ENCODE measurements at regions of chr7 and their contacts with region 1.

Region 1: DNA sequence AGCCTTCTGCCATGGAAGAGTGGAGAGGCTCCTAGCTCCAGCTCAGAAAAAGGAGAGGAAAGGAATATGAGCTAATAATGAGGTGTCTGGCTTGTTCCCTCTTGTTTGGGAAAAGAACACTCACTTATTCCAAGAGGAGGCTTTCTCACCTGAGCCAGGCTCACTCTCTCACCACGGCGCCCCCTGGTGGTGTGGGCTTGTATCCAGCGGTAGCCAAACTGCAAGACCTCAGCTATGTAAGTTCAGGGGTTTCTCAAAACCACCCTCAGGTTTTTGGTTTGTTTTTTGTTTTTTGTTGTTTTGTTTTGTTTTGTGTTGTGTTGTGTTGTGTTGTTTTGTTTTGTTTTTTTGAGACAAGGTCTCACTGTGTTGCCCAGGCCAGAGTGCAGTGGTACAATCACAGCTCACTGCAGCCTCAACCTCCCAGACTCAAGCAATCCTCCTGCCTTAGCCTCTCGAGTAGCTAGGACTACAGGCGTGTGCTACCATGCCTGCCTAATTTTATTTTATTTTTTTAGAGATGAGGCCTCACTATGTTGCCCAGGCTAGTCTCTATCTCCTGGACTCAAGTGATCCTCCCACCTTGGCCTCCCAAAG is 124.0 kb downstream of the TMEM130 start:
- DNase-seq: peak; percentile 76
- H3K4me3 ChIP-seq: no peak overlapping the region
- H3K27ac ChIP-seq: no peak overlapping the region
- H3K4me1 ChIP-seq: no peaks in the 10 kb centered on the region
- H3K27me3 ChIP-seq: no peaks in the 10 kb centered on the region
- CTCF ChIP-seq: peak; percentile 79

Region 2: GRCh38 chr7:98434095-98434494 is 311.7 kb before region 1 on chr7:
- intact Hi-C with region 1: loop called (anchors 2 kb)
- DNase-seq: no peak
- H3K4me3 ChIP-seq: no peak overlapping the region
- H3K27ac ChIP-seq: no peak overlapping the region
- H3K4me1 ChIP-seq: no peaks in the 10 kb centered on the region
- H3K27me3 ChIP-seq: no peaks in the 10 kb centered on the region
- CTCF ChIP-seq: no peak

Region 3: GRCh38 chr7:98841179-98841997 is 95.6 kb after region 1 on chr7:
- intact Hi-C with region 1: loop called (anchors 5 kb)
- DNase-seq: peak; percentile 62
- H3K4me3 ChIP-seq: no peak overlapping the region
- H3K27ac ChIP-seq: no peak overlapping the region
- H3K4me1 ChIP-seq: no peaks in the 10 kb centered on the region
- H3K27me3 ChIP-seq: no peaks in the 10 kb centered on the region
- CTCF ChIP-seq: peak; percentile 98